ENCODE measurements at regions of chr22 and their contacts with region 1.

Region 1: GRCh38 chr22:21074188-21074724 is 28.5 kb downstream of the LRRC74B start:
- DNase-seq: no peak
- ATAC-seq: peak in 1 of 4 donors; percentile 74
- H3K4me3 ChIP-seq: no peak overlapping the region
- H3K27ac ChIP-seq: no peak overlapping the region
- H3K4me1 ChIP-seq: no peaks in the 10 kb centered on the region
- H3K27me3 ChIP-seq: no peaks in the 10 kb centered on the region
- CTCF ChIP-seq: no peak

Region 2: GRCh38 chr22:21020802-21021429 is 53.3 kb before region 1 on chr22:
- intact Hi-C with region 1: loop called in 1 of 3 experiments (anchors 10 kb)
- DNase-seq: peak in 1 of 6 donors; percentile 1
- ATAC-seq: no peak
- H3K4me3 ChIP-seq: no peak overlapping the region
- H3K27ac ChIP-seq: no peak overlapping the region
- H3K4me1 ChIP-seq: no peaks in the 10 kb centered on the region
- H3K27me3 ChIP-seq: no peaks in the 10 kb centered on the region
- CTCF ChIP-seq: no peak

Measured in pancreas (tissue), 10 donors.